ENCODE measurements at regions of chr15 and their contacts with region 1.

Region 1: GRCh38 chr15:31435261-31435911 is 108.8 kb downstream of the KLF13 start:
- DNase-seq: peak; percentile 53 to 93 (median 87)
- ATAC-seq: peak; percentile 84
- H3K4me3 ChIP-seq: peak overlapping the region; percentile 48
- H3K4me3 Mint-ChIP-seq: peak overlapping the region; percentile 80 to 95 (median 86)
- H3K27ac ChIP-seq: peak overlapping the region; percentile 83
- H3K27ac Mint-ChIP-seq: peak overlapping the region; percentile 96 to 100 (median 99)
- H3K4me1 ChIP-seq: peaks cover 55 to 58% of the 10 kb centered on the region in 2 donors
- H3K4me1 Mint-ChIP-seq: peaks cover 44 to 90% (median 84%) of the 10 kb centered on the region in 7 donors
- H3K27me3 ChIP-seq: no peaks in the 10 kb centered on the region
- H3K27me3 Mint-ChIP-seq: no peaks in the 10 kb centered on the region

Region 2: DNA sequence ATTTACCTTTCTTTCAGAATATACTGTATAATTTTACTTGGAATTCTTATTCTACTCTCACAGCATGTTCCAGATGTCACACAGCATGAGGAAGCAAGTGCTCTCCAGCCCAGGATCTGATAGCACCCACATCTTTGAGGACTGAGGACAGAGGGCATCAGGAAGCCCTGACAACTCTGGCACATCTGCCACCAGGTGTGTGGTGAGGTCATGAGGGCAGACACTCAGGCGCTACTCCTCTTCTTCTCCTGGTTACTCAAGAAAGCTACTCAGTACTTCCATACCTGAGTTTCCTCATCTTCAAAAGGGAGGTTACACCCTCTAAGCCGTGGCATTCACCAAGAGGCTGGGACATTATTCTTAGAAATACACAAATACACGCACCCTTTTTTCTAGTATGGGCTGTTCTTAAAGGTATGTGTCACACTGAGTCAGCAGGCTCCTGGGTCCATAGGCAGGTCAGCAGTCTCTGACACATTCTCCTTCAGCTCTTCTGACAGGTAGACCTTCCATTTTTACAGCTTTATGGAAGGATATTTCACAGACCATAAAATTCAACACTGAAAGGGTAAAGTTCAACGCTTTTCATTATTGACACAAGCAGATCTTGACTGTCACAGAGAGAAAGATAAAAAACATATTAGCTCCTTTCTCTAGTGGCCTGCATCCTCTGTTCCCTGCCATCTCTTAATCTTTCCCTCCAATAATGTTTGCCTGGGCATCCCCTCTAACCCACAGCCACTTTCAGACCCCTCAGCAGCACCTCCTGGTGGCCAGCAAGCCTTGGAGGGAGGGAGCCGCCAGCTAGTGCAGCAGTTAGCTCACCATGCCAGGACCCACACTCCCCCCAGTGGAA is 1509.9 kb before region 1 on chr15:
- CTCF ChIA-PET with region 1: no interaction called
- POLR2A ChIA-PET with region 1: no interaction called
- intact Hi-C with region 1: no loop called
- DNase-seq: peak in 4 of 9 donors; percentile 11 to 17 (median 15)
- ATAC-seq: no peak
- H3K4me3 ChIP-seq: no peak overlapping the region
- H3K4me3 Mint-ChIP-seq: no peak overlapping the region
- H3K27ac ChIP-seq: no peak overlapping the region
- H3K27ac Mint-ChIP-seq: no peak overlapping the region
- H3K4me1 ChIP-seq: no peaks in the 10 kb centered on the region
- H3K4me1 Mint-ChIP-seq: peaks cover 0 to 1% (median 0%) of the 10 kb centered on the region in 7 donors
- H3K27me3 ChIP-seq: peaks cover 0 to 5% of the 10 kb centered on the region in 2 donors
- H3K27me3 Mint-ChIP-seq: peaks cover 19 to 81% (median 63%) of the 10 kb centered on the region in 5 donors

Region 3: DNA sequence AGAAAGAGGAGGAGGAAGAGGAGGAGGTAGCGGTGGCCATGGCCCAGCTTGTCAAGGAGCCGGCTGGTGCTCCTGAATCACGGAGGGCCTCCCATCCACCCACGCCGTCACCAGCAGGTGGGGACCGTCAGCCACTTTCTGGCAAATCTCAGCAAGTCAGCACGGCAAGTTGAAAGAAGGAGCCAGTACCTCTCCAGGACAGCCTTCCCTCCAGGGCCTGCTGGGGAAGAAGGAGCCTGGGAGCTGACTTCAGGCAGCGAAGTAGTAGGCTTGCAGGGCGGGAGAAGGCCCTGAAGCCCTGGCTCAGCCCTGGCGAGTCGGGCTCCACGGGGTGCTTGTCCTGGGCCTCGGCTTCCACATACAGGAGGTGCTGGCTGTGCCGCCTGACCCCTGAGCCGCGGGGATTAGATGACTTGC is 234.6 kb before region 1 on chr15:
- CTCF ChIA-PET with region 1: interaction called, 7 read pairs
- POLR2A ChIA-PET with region 1: interaction called, 12 read pairs
- intact Hi-C with region 1: loop called (anchors 1 kb)
- DNase-seq: peak; percentile 45 to 81 (median 72)
- ATAC-seq: peak; percentile 77
- H3K4me3 ChIP-seq: no peak overlapping the region
- H3K4me3 Mint-ChIP-seq: no peak overlapping the region
- H3K27ac ChIP-seq: no peak overlapping the region
- H3K27ac Mint-ChIP-seq: peak overlapping the region in 3 of 9 donors; percentile 4 to 77 (median 38)
- H3K4me1 ChIP-seq: peaks cover 0 to 31% of the 10 kb centered on the region in 2 donors
- H3K4me1 Mint-ChIP-seq: peaks cover 10 to 48% (median 36%) of the 10 kb centered on the region in 7 donors
- H3K27me3 ChIP-seq: no peaks in the 10 kb centered on the region
- H3K27me3 Mint-ChIP-seq: peaks cover 0 to 33% (median 0%) of the 10 kb centered on the region in 5 donors

Region 4: GRCh38 chr15:31265871-31266711 is 169.3 kb before region 1 on chr15:
- CTCF ChIA-PET with region 1: interaction called, 6 read pairs
- POLR2A ChIA-PET with region 1: interaction called, 13 read pairs
- intact Hi-C with region 1: loop called (anchors 1 to 2 kb)
- DNase-seq: peak; percentile 43 to 90 (median 86)
- ATAC-seq: peak; percentile 84
- H3K4me3 ChIP-seq: peak overlapping the region; percentile 24
- H3K4me3 Mint-ChIP-seq: peak overlapping the region; percentile 71 to 95 (median 78)
- H3K27ac ChIP-seq: peak overlapping the region; percentile 81
- H3K27ac Mint-ChIP-seq: peak overlapping the region; percentile 94 to 100 (median 96)
- H3K4me1 ChIP-seq: peaks cover 48 to 88% of the 10 kb centered on the region in 2 donors
- H3K4me1 Mint-ChIP-seq: peaks cover 62 to 99% (median 96%) of the 10 kb centered on the region in 7 donors
- H3K27me3 ChIP-seq: no peaks in the 10 kb centered on the region
- H3K27me3 Mint-ChIP-seq: no peaks in the 10 kb centered on the region

Region 5: DNA sequence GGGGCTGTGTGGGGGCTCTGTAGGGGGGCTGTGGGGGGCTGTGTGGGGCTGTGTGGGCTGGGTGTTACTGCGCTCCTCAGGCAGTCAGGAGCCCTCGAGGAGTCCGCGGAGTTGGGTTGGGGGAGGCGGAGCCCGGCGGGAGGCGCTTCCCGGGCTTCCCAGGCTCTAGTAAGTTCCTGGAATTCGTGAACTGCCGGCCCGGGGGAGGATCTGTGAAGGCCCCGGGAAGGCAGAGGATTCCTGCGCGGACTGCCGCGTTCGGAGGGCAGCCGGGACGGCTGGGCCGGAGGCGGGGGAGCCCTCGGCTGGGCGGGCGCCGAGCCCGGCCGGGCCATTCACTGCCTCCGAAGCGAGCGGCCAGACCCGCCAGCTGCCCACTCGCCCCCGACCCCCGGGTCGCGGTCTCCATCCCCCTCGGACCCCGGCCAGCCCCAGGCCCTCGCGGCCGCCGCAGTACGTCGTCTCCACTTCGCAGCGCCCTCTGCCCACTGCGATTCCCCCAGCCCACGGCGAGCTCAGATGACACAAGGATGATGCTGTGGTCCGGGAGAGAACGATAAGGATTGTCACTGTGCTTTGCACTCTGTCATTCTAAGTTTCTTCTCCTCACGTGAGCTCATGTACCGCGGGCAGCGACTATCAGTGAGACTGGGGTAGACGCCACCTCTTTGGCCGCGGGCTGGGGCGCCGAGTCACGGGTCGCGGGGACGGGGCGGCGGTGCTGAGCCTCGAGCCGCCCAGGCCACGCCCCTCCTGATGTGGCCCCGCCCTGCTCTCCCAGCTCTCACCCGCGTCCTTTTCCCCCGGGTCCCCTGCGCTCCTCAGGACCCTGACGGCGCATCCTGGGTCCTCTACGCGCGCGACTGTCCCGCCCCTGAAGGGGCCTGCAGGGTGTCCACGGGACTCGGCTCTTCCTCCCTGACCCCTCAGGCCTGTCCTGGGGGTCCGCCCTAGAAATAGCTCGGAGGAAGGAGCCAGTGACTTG is 43.4 kb before region 1 on chr15:
- CTCF ChIA-PET with region 1: interaction called, 7 read pairs
- POLR2A ChIA-PET with region 1: interaction called, 18 read pairs
- intact Hi-C with region 1: loop called (anchors 1 kb)
- DNase-seq: peak; percentile 61 to 87 (median 73)
- ATAC-seq: peak; percentile 91
- H3K4me3 ChIP-seq: peak overlapping the region; percentile 72
- H3K4me3 Mint-ChIP-seq: peak overlapping the region; percentile 81 to 95 (median 90)
- H3K27ac ChIP-seq: peak overlapping the region; percentile 68
- H3K27ac Mint-ChIP-seq: peak overlapping the region; percentile 79 to 95 (median 88)
- H3K4me1 ChIP-seq: peaks cover 13 to 30% of the 10 kb centered on the region in 2 donors
- H3K4me1 Mint-ChIP-seq: peaks cover 21 to 61% (median 46%) of the 10 kb centered on the region in 7 donors
- H3K27me3 ChIP-seq: no peaks in the 10 kb centered on the region
- H3K27me3 Mint-ChIP-seq: no peaks in the 10 kb centered on the region

Region 6: GRCh38 chr15:31472636-31473384 is 37.4 kb after region 1 on chr15:
- CTCF ChIA-PET with region 1: interaction called, 18 read pairs
- POLR2A ChIA-PET with region 1: interaction called, 33 read pairs
- intact Hi-C with region 1: loop called (anchors 1 kb)
- DNase-seq: peak in 8 of 9 donors; percentile 48 to 71 (median 66)
- ATAC-seq: peak; percentile 90
- H3K4me3 ChIP-seq: peak overlapping the region; percentile 28
- H3K4me3 Mint-ChIP-seq: peak overlapping the region; percentile 69 to 90 (median 79)
- H3K27ac ChIP-seq: peak overlapping the region; percentile 66
- H3K27ac Mint-ChIP-seq: peak overlapping the region; percentile 90 to 96 (median 93)
- H3K4me1 ChIP-seq: peaks cover 29 to 34% of the 10 kb centered on the region in 2 donors
- H3K4me1 Mint-ChIP-seq: peaks cover 22 to 62% (median 58%) of the 10 kb centered on the region in 7 donors
- H3K27me3 ChIP-seq: no peaks in the 10 kb centered on the region
- H3K27me3 Mint-ChIP-seq: no peaks in the 10 kb centered on the region

Region 7: GRCh38 chr15:31511707-31512310 is 76.4 kb after region 1 on chr15:
- CTCF ChIA-PET with region 1: no interaction called
- POLR2A ChIA-PET with region 1: no interaction called
- intact Hi-C with region 1: loop called in 1 of 2 experiments (anchors 2 kb)
- DNase-seq: peak in 5 of 9 donors; percentile 14 to 62 (median 51)
- ATAC-seq: peak; percentile 75
- H3K4me3 ChIP-seq: no peak overlapping the region
- H3K4me3 Mint-ChIP-seq: peak overlapping the region in 2 of 10 donors; percentile 33 to 67
- H3K27ac ChIP-seq: no peak overlapping the region
- H3K27ac Mint-ChIP-seq: peak overlapping the region in 4 of 9 donors; percentile 19 to 77 (median 31)
- H3K4me1 ChIP-seq: peaks cover 6 to 10% of the 10 kb centered on the region in 2 donors
- H3K4me1 Mint-ChIP-seq: peaks cover 9 to 36% (median 18%) of the 10 kb centered on the region in 7 donors
- H3K27me3 ChIP-seq: no peaks in the 10 kb centered on the region
- H3K27me3 Mint-ChIP-seq: peaks cover 0 to 11% (median 5%) of the 10 kb centered on the region in 5 donors

Region 8: GRCh38 chr15:31554261-31554660 is 118.9 kb after region 1 on chr15:
- CTCF ChIA-PET with region 1: no interaction called
- POLR2A ChIA-PET with region 1: no interaction called
- intact Hi-C with region 1: no loop called
- DNase-seq: no peak
- ATAC-seq: no peak
- H3K4me3 ChIP-seq: no peak overlapping the region
- H3K4me3 Mint-ChIP-seq: no peak overlapping the region
- H3K27ac ChIP-seq: no peak overlapping the region
- H3K27ac Mint-ChIP-seq: no peak overlapping the region
- H3K4me1 ChIP-seq: no peaks in the 10 kb centered on the region
- H3K4me1 Mint-ChIP-seq: no peaks in the 10 kb centered on the region
- H3K27me3 ChIP-seq: no peaks in the 10 kb centered on the region
- H3K27me3 Mint-ChIP-seq: peaks cover 0 to 15% (median 6%) of the 10 kb centered on the region in 5 donors

Region 9: DNA sequence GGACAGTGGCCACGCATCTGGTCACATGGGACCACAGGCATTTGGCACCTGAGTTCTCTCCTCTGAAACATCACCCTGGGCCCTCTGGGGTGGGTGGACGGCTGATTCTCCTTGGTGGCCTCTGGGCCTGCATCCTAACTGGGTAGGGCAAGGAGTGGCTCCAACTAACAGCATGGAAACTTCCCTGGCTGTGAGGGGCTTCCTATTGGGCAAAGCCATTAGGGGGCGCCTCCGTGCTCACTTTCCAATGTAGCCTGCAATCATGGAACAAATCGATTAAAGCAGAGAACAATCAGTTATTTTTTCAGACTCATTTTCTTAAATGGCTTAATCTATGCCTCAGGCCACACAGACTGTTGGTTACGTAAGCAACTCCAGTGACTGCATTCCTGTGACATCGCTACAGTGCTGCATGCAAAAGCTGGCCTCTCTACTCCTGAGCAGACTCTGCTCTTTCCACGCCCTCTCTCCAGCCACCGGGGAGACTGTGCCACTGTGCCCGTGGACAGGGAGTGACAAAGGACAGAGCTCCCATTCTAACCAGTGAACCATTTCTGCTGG is 170.1 kb after region 1 on chr15:
- CTCF ChIA-PET with region 1: no interaction called
- POLR2A ChIA-PET with region 1: no interaction called
- intact Hi-C with region 1: no loop called
- DNase-seq: no peak
- ATAC-seq: no peak
- H3K4me3 ChIP-seq: no peak overlapping the region
- H3K4me3 Mint-ChIP-seq: no peak overlapping the region
- H3K27ac ChIP-seq: no peak overlapping the region
- H3K27ac Mint-ChIP-seq: no peak overlapping the region
- H3K4me1 ChIP-seq: no peaks in the 10 kb centered on the region
- H3K4me1 Mint-ChIP-seq: peaks cover 0 to 2% (median 0%) of the 10 kb centered on the region in 7 donors
- H3K27me3 ChIP-seq: no peaks in the 10 kb centered on the region
- H3K27me3 Mint-ChIP-seq: peaks cover 4 to 32% (median 24%) of the 10 kb centered on the region in 5 donors

Region 10: DNA sequence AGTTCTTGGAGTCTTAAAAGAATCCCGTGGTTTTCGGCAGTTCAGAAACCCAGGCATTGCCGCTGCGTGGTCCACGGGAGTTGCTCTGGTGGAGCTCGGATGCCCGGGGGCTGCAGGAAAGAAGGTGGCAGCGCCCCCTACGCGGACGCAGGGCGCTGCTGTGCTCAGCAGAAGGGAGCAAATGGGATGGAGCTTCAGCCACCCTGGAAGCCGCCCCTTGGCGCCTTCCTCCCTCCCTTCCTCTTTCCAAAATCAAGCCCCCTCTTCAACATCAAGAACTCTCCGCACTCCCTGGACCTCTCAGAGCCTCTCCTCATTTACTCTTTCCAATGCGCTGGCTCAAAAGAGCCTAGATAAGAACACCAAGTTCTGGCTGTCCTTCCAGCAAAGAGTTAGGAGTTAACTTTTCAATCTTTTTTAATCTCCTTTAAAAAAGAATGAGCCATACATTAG is 594.0 kb after region 1 on chr15:
- CTCF ChIA-PET with region 1: no interaction called
- POLR2A ChIA-PET with region 1: no interaction called
- intact Hi-C with region 1: no loop called
- DNase-seq: no peak
- ATAC-seq: peak; percentile 42
- H3K4me3 ChIP-seq: no peak overlapping the region
- H3K4me3 Mint-ChIP-seq: peak overlapping the region in 5 of 10 donors; percentile 43 to 77 (median 55)
- H3K27ac ChIP-seq: no peak overlapping the region
- H3K27ac Mint-ChIP-seq: no peak overlapping the region
- H3K4me1 ChIP-seq: no peaks in the 10 kb centered on the region
- H3K4me1 Mint-ChIP-seq: peaks cover 0 to 16% (median 7%) of the 10 kb centered on the region in 7 donors
- H3K27me3 ChIP-seq: no peaks in the 10 kb centered on the region
- H3K27me3 Mint-ChIP-seq: peaks cover 62 to 79% (median 75%) of the 10 kb centered on the region in 5 donors